ENCODE measurements at regions of chr16 and their contacts with region 1.

Region 1: DNA sequence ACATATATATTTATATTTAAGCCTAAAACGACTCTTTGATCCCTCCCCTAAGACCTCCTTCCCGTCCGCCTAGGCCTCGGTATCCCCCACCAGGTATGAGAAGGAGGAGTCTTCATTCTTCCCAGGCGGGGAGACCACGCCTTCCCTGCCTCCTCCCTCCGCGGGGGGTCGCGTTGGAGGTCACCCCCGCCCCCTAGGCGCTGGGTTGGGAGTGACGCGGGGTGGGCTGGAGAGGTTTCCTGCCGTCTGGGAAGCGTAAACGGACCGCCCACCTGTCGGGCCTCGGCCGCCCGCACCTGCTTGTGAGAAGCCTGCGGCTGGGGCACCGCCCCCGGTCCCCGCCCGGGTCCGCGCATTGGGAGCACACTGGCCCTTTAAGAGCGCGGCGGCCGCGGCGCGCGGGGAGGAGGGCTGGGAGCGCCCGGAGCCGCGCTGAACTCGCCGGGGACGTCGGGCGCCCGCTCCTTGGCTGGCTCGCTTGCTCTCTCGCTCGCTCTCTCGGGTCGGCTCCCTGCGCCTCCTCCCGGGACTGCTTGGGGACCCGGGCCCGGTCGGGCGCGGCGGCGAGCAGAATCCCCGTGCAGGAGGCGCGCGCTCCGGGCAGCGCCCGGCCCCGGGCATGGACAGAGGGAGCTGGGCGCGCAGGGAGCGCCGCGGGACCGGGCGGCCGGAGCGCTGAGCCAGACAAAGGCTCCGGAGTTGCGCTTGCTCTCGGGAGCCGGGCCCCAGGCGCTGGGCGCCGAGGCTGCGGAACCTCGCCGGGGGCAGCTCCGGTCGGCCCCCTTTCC is at the start of gene MMP15:
- DNase-seq: peak; percentile 50 to 77 (median 56)
- H3K4me3 ChIP-seq: peak within 1 kb of the TSS; percentile 11 to 53
- H3K4me3 Mint-ChIP-seq: peak within 1 kb of the TSS; percentile 89 to 99 (median 93)
- H3K27ac ChIP-seq: peak within 1 kb of the TSS; percentile 34
- H3K27ac Mint-ChIP-seq: peak within 1 kb of the TSS; percentile 81 to 93 (median 91)
- H3K4me1 ChIP-seq: peaks cover 19% of the 10 kb centered on the region
- H3K4me1 Mint-ChIP-seq: peaks cover 6 to 29% (median 18%) of the 10 kb centered on the region in 4 donors
- H3K27me3 ChIP-seq: no peaks in the 10 kb centered on the region
- H3K27me3 Mint-ChIP-seq: peaks cover 0 to 1% of the 10 kb centered on the region in 2 donors
- total RNA-seq, gene MMP15: 1.6 to 1.8 TPM

Region 2: GRCh38 chr16:57984331-57985203 is 41.0 kb before region 1 on chr16:
- CTCF ChIA-PET with region 1: no interaction called
- POLR2A ChIA-PET with region 1: no interaction called
- intact Hi-C with region 1: loop called (anchors 1 kb)
- DNase-seq: peak; percentile 84 to 95 (median 92)
- H3K4me3 ChIP-seq: peak overlapping the region; percentile 73 to 76
- H3K4me3 Mint-ChIP-seq: peak overlapping the region; percentile 80 to 94 (median 90)
- H3K27ac ChIP-seq: peak overlapping the region; percentile 57
- H3K27ac Mint-ChIP-seq: peak overlapping the region; percentile 75 to 94 (median 85)
- H3K4me1 ChIP-seq: peaks cover 15% of the 10 kb centered on the region
- H3K4me1 Mint-ChIP-seq: peaks cover 4 to 26% (median 16%) of the 10 kb centered on the region in 4 donors
- H3K27me3 ChIP-seq: no peaks in the 10 kb centered on the region
- H3K27me3 Mint-ChIP-seq: no peaks in the 10 kb centered on the region

Region 3: GRCh38 chr16:58317608-58318152 is 292.1 kb after region 1 on chr16:
- CTCF ChIA-PET with region 1: no interaction called
- POLR2A ChIA-PET with region 1: no interaction called
- intact Hi-C with region 1: no loop called
- DNase-seq: no peak
- H3K4me3 ChIP-seq: no peak overlapping the region
- H3K4me3 Mint-ChIP-seq: no peak overlapping the region
- H3K27ac ChIP-seq: no peak overlapping the region
- H3K27ac Mint-ChIP-seq: no peak overlapping the region
- H3K4me1 ChIP-seq: no peaks in the 10 kb centered on the region
- H3K4me1 Mint-ChIP-seq: no peaks in the 10 kb centered on the region
- H3K27me3 ChIP-seq: no peaks in the 10 kb centered on the region
- H3K27me3 Mint-ChIP-seq: peaks cover 6 to 18% of the 10 kb centered on the region in 2 donors